GM12878 (cell line): ENCODE measurements at regions of chr12 and their contacts with region 1.

Region 1: DNA sequence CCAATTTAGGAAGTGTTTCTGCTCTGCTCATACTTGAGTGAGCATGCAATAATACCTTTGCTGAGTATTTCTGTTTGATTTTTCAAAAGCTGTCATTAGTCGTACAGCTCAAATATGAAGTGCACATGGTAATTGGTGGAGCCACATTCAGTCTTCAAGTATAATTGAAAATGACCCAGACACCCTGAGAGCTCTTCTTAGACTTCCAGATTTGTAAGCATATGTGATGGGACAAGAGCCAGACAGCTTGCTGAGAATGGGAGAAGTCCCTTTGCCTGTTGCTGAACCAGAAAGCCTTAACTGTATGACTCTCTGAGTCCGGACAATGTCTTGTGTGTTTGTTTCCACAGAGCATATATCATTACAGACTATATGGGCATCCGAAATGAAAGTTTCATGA is 307.3 kb downstream of the TMEM117 start:
- DNase-seq: no peak
- ATAC-seq: no peak
- H3K4me3 ChIP-seq: no peak overlapping the region
- H3K27ac ChIP-seq: no peak overlapping the region
- H3K4me1 ChIP-seq: no peaks in the 10 kb centered on the region
- H3K27me3 ChIP-seq: no peaks in the 10 kb centered on the region
- CTCF ChIP-seq: no peak
- EP300 ChIP-seq: no peak
- POLR2A ChIP-seq: no peak
- RAD21 ChIP-seq: no peak

Region 2: GRCh38 chr12:44154128-44154527 is 11.0 kb after region 1 on chr12:
- CTCF ChIA-PET with region 1: interaction called, 4 read pairs
- POLR2A ChIA-PET with region 1: no interaction called
- RAD21 ChIA-PET with region 1: no interaction called
- SMC1A ChIA-PET with region 1: interaction called, 14 read pairs
- in situ Hi-C with region 1: no loop called
- intact Hi-C with region 1: no loop called
- DNase-seq: no peak
- ATAC-seq: no peak
- H3K4me3 ChIP-seq: no peak overlapping the region
- H3K27ac ChIP-seq: no peak overlapping the region
- H3K4me1 ChIP-seq: peaks cover 5% of the 10 kb centered on the region; the same call in 1 of the 2 replicates
- H3K27me3 ChIP-seq: no peaks in the 10 kb centered on the region
- CTCF ChIP-seq: no peak
- EP300 ChIP-seq: no peak
- POLR2A ChIP-seq: no peak
- RAD21 ChIP-seq: no peak